Activated CD4-positive, alpha-beta T cell treated with anti-CD3 and anti-CD28 coated beads for 36 hours (primary cell): ENCODE measurements at regions of chr19 and their contacts with region 1.

Region 1: DNA sequence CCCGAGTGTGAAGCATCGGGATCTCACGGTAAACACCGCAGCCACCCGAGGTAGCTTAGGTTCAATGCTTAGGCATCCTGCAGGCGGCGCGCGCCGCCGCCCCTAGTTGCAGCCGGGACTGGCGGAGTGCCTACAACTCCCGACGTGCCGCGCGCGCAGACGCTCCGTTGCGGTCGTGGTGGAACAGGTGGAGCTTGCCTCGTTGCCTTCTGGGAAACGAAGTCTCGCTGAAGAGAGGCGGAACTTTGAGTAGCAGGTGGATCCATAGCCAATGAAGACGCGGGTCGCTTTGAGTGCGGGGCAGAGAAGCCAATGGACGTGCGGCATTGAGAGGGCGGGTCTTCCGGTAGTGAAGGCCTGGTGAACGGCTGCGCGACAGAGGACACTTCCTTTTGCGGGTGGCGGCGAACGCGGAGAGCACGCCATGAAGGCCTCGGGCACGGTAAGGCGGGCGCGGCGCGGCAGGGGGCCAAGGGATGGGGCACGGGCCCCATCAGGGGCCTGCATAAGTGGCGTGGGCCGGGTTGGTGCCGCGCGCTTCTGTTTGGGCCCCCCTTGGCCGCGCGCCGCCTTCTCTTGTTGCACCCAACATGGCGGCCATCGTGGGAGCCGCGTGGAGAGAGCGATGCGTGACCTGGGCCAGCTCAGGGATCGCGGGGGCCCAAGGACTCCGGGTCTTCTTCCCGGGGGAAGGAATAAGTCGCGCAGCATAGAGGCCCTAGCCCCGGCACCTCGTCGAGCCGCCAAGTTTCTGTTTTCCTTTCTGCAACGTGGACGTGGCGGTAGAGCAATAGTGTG is at the start of gene RPL18A:
- DNase-seq: peak; percentile 100
- ATAC-seq: peak; percentile 95
- H3K4me3 Mint-ChIP-seq: peak within 1 kb of the TSS; percentile 97
- H3K27ac Mint-ChIP-seq: peak within 1 kb of the TSS; percentile 98
- H3K4me1 Mint-ChIP-seq: peaks cover 35% of the 10 kb centered on the region
- H3K27me3 Mint-ChIP-seq: no peaks in the 10 kb centered on the region
- total RNA-seq, gene RPL18A: 3,109 to 3,329 TPM

Region 2: GRCh38 chr19:17305517-17306284 is 554.0 kb before region 1 on chr19 and contains the start of gene MRPL34:
- CTCF ChIA-PET with region 1: no interaction called
- POLR2A ChIA-PET with region 1: no interaction called
- intact Hi-C with region 1: loop called in 1 of 2 experiments (anchors 1 kb)
- DNase-seq: peak; percentile 97
- ATAC-seq: peak; percentile 70
- H3K4me3 Mint-ChIP-seq: peak within 1 kb of the TSS; percentile 86
- H3K27ac Mint-ChIP-seq: peak within 1 kb of the TSS; percentile 92
- H3K4me1 Mint-ChIP-seq: peaks cover 46% of the 10 kb centered on the region
- H3K27me3 Mint-ChIP-seq: no peaks in the 10 kb centered on the region
- total RNA-seq, gene MRPL34: 72.0 to 88.6 TPM

Region 3: DNA sequence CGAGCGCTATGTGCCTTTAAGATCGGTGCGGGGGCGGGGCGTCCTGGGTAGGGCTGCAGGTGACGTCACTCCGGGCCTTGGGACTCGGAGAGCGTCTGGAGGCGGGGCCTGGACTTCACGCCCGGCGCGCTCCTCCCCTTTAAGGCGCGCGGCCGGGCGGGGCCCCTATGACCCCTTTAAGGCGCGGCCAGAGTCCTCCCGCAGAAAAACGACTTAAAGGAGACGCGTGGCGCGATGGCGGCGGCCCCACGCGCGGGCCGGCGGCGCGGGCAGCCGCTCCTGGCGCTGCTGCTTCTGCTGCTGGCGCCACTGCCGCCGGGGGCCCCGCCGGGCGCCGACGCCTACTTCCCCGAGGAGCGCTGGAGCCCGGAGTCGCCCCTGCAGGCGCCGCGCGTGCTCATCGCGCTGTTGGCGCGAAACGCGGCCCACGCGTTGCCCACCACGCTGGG is 304.2 kb before region 1 on chr19 and contains the start of gene COLGALT1:
- CTCF ChIA-PET with region 1: interaction called, 6 read pairs
- POLR2A ChIA-PET with region 1: no interaction called
- intact Hi-C with region 1: loop called in 1 of 2 experiments (anchors 5 kb)
- DNase-seq: peak; percentile 100
- ATAC-seq: peak; percentile 96
- H3K4me3 Mint-ChIP-seq: peak within 1 kb of the TSS; percentile 82
- H3K27ac Mint-ChIP-seq: peak within 1 kb of the TSS; percentile 67
- H3K4me1 Mint-ChIP-seq: peaks cover 21% of the 10 kb centered on the region
- H3K27me3 Mint-ChIP-seq: no peaks in the 10 kb centered on the region
- total RNA-seq, gene COLGALT1: 51.2 to 64.3 TPM

Region 4: DNA sequence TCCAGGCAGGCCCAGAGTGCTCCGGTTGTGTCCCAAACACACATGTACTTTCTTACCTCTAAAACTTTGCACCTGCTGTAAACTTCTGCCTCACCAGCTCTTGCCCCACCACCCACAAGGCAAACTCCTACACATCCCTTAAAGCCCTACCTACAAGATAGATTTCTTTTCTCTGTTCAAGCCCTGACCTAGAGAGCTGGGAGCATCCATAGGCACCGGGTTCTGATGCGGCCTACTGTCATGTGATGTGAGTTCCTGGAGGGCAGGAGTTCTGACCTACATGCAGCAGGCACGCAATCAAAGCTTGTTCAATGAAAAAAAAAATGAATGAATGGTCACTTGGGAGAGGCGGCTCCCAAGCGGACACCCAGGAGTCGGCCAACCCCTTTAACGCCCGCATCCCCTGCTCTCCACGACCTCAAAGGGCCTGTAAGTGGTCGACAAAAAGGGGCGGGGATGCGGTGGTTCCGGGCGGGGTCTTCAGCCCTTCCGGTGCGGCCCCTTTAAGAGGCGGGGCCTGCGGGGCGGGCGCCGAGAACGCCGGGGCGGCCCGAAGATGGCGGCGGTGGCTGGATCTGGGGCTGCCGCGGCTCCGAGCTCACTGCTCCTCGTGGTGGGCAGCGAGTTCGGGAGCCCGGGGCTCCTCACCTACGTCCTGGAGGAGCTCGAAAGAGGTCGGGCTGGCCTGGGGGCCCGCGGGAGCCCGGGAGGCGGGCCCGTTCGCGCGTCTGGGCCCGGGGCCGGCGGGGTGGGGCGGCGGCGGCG is 140.6 kb before region 1 on chr19 and contains the start of gene MAP1S:
- CTCF ChIA-PET with region 1: interaction called, 3 read pairs
- POLR2A ChIA-PET with region 1: interaction called, 4 read pairs
- intact Hi-C with region 1: loop called in 1 of 2 experiments (anchors 2 kb)
- DNase-seq: peak; percentile 86
- ATAC-seq: peak; percentile 83
- H3K4me3 Mint-ChIP-seq: peak within 1 kb of the TSS; percentile 81
- H3K27ac Mint-ChIP-seq: peak within 1 kb of the TSS; percentile 88
- H3K4me1 Mint-ChIP-seq: peaks cover 35% of the 10 kb centered on the region
- H3K27me3 Mint-ChIP-seq: no peaks in the 10 kb centered on the region
- total RNA-seq, gene MAP1S: 57.6 to 79.3 TPM

Region 5: DNA sequence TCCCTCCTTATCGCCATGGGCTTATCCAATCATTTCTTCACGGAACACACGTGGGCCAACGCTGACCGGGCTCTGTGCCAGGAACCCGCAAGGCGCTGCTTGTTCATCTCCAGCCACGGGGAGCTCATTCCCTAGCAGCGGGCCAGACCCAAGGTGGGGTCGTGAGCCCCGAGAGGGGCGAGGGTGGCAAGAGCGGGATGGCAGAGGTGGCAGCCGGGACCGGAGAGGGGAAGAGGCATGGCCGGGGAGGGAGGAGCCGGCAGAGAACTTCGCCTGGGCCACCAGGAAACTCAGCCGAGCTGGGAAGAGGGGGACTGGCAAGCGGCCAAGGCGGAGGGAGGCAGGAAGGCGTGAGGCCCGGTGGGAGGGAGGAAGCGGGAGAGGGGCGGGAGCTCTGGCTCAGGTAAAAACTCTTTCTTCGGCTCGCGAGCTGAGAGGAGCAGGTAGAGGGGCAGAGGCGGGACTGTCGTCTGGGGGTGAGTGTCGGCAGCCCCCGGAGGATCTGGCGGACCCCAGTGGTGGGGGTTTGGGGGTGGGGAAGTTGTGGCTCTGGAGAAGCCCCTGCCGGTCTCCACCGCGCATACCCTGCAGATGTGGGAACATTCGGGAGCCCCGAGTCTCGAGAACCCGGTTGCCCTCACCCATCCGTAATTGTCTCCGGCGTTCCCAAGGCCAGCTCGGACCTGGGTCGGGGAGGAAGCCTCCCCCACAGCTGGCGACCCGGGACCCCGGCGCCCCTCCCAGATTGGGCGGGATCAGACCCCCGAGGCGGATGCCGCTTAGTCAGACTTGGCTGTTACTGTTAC is 64.8 kb before region 1 on chr19 and contains the start of gene B3GNT3:
- CTCF ChIA-PET with region 1: interaction called, 6 read pairs
- POLR2A ChIA-PET with region 1: interaction called, 3 read pairs
- intact Hi-C with region 1: loop called in 1 of 2 experiments (anchors 5 kb)
- DNase-seq: peak; percentile 56
- ATAC-seq: no peak
- H3K4me3 Mint-ChIP-seq: peak within 1 kb of the TSS; percentile 60
- H3K27ac Mint-ChIP-seq: peak within 1 kb of the TSS; percentile 19
- H3K4me1 Mint-ChIP-seq: peaks cover 57% of the 10 kb centered on the region
- H3K27me3 Mint-ChIP-seq: no peaks in the 10 kb centered on the region
- total RNA-seq, gene B3GNT3: 0.75 to 0.95 TPM

Region 6: GRCh38 chr19:17873786-17874757 is 14.3 kb after region 1 on chr19:
- CTCF ChIA-PET with region 1: interaction called, 16 read pairs
- POLR2A ChIA-PET with region 1: interaction called, 14 read pairs
- intact Hi-C with region 1: loop called in 1 of 2 experiments (anchors 1 kb)
- DNase-seq: peak; percentile 89
- ATAC-seq: peak; percentile 83
- H3K4me3 Mint-ChIP-seq: peak overlapping the region; percentile 78
- H3K27ac Mint-ChIP-seq: peak overlapping the region; percentile 25
- H3K4me1 Mint-ChIP-seq: peaks cover 17% of the 10 kb centered on the region
- H3K27me3 Mint-ChIP-seq: no peaks in the 10 kb centered on the region

Region 7: GRCh38 chr19:18000935-18001778 is 141.4 kb after region 1 on chr19:
- CTCF ChIA-PET with region 1: interaction called, 10 read pairs
- POLR2A ChIA-PET with region 1: interaction called, 4 read pairs
- intact Hi-C with region 1: loop called (anchors 1 kb)
- DNase-seq: peak; percentile 95
- ATAC-seq: peak; percentile 84
- H3K4me3 Mint-ChIP-seq: peak overlapping the region; percentile 85
- H3K27ac Mint-ChIP-seq: peak overlapping the region; percentile 95
- H3K4me1 Mint-ChIP-seq: peaks cover 25% of the 10 kb centered on the region
- H3K27me3 Mint-ChIP-seq: no peaks in the 10 kb centered on the region